ENCODE measurements at regions of chr22 and their contacts with region 1.

Region 1: GRCh38 chr22:45615364-45615763 is 56.3 kb upstream of the ATXN10 start:
- DNase-seq: no peak
- ATAC-seq: no peak
- H3K4me3 ChIP-seq: no peak overlapping the region
- H3K27ac ChIP-seq: no peak overlapping the region
- H3K4me1 ChIP-seq: peaks cover 4% of the 10 kb centered on the region
- H3K27me3 ChIP-seq: no peaks in the 10 kb centered on the region
- CTCF ChIP-seq: no peak

Region 2: GRCh38 chr22:47594836-47595521 is 1979.6 kb after region 1 on chr22:
- intact Hi-C with region 1: loop called (anchors 5 kb)
- DNase-seq: no peak
- ATAC-seq: no peak
- H3K4me3 ChIP-seq: no peak overlapping the region
- H3K27ac ChIP-seq: no peak overlapping the region
- H3K4me1 ChIP-seq: no peaks in the 10 kb centered on the region
- H3K27me3 ChIP-seq: no peaks in the 10 kb centered on the region
- CTCF ChIP-seq: no peak

Measured in psoas muscle (tissue), 8 donors.